ENCODE measurements at regions of chr7 and their contacts with region 1.

Region 1: DNA sequence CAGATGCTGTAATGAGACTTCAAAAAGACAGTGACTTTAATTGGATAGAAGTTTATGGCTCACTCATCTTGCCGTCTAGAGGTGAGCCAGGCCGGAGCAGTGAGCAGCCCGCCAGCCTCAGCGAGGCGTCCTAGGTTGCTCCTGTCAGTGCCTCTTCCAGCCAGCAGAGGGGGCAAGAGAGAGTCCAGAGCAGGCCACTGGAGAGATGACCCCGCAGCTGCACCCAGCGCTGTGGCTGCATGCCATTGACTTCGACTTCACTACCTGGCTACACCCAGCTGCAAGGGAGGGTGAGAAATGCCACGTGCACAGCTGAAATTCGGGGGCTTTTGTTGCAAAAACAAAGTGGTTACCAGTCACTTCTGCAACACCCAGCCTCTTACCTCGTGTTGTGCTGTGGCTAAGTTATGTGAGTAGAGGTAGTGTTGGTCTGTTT is 26.5 kb downstream of the NUB1 start:
- DNase-seq: peak; percentile 85
- CTCF ChIP-seq: peak; percentile 76

Region 2: GRCh38 chr7:150735596-150736358 is 632.4 kb before region 1 on chr7:
- in situ Hi-C with region 1: no loop called
- DNase-seq: no peak
- CTCF ChIP-seq: no peak

Region 3: DNA sequence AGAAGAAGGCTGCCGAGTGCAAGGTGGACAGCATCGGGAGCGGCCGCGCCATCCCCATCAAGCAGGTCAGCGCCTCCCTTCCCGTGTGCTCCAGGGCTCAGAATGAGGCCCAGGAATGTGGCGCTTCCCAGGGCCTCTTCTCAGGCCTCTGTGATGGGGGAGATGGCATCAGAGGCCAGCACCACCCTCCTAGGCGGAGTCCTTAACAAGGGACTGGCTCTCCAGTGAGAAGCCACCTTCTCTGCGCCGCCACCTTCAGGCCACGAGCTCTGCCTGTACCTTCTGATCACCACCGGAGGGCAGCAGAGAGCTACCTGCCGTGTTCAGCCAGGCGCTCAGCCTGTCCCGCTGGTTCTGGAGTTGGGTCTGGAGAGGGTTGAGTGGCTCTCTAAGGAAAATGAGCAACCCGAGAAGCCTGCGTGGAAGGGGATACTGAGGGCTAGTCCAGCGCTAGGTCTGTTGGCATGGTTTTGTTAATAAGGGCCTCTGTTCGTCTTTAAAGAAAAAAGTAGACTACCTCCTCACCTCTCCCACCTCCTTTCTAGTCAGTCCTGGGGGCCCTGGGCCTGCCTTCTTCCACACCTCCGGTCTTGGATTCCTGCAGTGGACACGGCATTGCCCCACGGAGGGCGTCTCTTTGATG is 244.2 kb before region 1 on chr7:
- in situ Hi-C with region 1: no loop called
- DNase-seq: peak; percentile 97
- CTCF ChIP-seq: peak; percentile 98

Region 4: DNA sequence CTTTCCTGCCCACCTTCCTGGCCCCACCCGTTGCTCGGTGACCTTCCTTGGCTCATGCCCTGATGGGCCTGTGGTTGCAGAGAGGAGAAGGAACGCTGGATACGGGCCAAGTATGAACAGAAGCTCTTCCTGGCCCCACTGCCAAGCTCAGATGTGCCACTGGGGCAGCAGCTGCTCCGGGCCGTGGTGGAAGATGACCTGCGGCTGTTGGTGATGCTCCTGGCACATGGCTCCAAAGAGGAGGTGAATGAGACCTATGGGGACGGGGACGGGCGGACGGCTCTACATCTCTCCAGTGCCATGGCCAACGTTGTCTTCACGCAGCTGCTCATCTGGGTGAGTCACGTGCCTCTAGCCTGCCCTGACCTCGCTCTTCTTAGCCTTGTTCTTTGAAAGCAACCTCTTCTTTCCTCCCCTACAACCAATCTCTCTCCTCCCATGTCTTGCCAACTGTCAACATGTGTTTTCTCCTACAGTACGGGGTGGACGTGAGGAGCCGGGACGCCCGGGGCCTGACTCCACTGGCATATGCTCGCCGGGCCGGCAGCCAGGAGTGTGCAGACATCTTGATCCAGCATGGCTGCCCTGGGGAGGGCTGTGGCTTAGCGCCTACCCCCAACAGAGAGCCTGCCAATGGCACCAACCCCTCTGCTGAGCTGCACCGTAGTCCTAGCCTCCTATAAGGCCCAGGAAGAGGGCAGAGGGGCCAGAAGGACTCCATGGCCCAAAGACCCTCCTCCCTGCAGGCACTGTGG is 224.7 kb before region 1 on chr7:
- in situ Hi-C with region 1: no loop called
- DNase-seq: no peak
- CTCF ChIP-seq: no peak

Region 5: GRCh38 chr7:151448261-151449252 is 80.4 kb after region 1 on chr7:
- in situ Hi-C with region 1: loop called (anchors 10 kb)
- DNase-seq: peak; percentile 90
- CTCF ChIP-seq: peak; percentile 77